Ovary (tissue), 10 donors: ENCODE measurements at regions of chr6 and their contacts with region 1.

Region 1: DNA sequence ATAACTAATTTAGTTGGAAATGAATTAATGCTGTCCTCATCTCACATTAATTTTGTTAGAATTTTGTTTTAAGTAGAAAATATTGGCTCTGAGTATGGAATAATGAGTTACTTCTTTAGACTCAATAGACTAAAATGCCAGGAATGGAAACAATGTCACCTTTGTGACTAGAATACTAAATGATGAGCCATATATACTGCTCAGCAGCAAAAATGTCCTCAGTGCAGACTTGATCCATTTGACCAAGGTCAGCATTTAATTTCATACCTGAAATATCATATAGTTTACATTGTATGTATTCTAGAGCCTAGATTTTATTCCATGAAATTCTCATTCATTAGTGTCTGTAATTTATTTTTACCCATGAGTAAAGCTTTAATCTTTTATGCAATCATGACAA is 217.7 kb downstream of the ADGRB3 start:
- DNase-seq: no peak
- H3K4me3 ChIP-seq: no peak overlapping the region
- H3K27ac ChIP-seq: no peak overlapping the region
- H3K4me1 ChIP-seq: no peaks in the 10 kb centered on the region
- H3K27me3 ChIP-seq: no peaks in the 10 kb centered on the region
- CTCF ChIP-seq: no peak
- EP300 ChIP-seq: no peak
- POLR2A ChIP-seq: no peak

Region 2: GRCh38 chr6:68164698-68165097 is 688.1 kb before region 1 on chr6:
- intact Hi-C with region 1: no loop called
- DNase-seq: no peak
- H3K4me3 ChIP-seq: no peak overlapping the region
- H3K27ac ChIP-seq: no peak overlapping the region
- H3K4me1 ChIP-seq: no peaks in the 10 kb centered on the region
- H3K27me3 ChIP-seq: no peaks in the 10 kb centered on the region
- CTCF ChIP-seq: no peak
- EP300 ChIP-seq: no peak
- POLR2A ChIP-seq: no peak

Region 3: GRCh38 chr6:69370763-69371162 is 518.0 kb after region 1 on chr6:
- intact Hi-C with region 1: loop called in 1 of 4 experiments (anchors 10 kb)
- DNase-seq: no peak
- H3K4me3 ChIP-seq: no peak overlapping the region
- H3K27ac ChIP-seq: no peak overlapping the region
- H3K4me1 ChIP-seq: no peaks in the 10 kb centered on the region
- H3K27me3 ChIP-seq: no peaks in the 10 kb centered on the region
- CTCF ChIP-seq: no peak
- EP300 ChIP-seq: no peak
- POLR2A ChIP-seq: no peak